ENCODE measurements at regions of chr13 and their contacts with region 1.

Region 1: GRCh38 chr13:25836574-25837336 is 215.1 kb downstream of the SHISA2 start:
- DNase-seq: no peak
- ATAC-seq: no peak
- H3K4me3 ChIP-seq: no peak overlapping the region
- H3K27ac ChIP-seq: no peak overlapping the region
- H3K4me1 ChIP-seq: no peaks in the 10 kb centered on the region
- H3K27me3 ChIP-seq: no peaks in the 10 kb centered on the region
- CTCF ChIP-seq: no peak
- EP300 ChIP-seq: no peak
- POLR2A ChIP-seq: no peak
- RAD21 ChIP-seq: no peak

Region 2: GRCh38 chr13:25890671-25891212 is 54.0 kb after region 1 on chr13:
- CTCF ChIA-PET with region 1: no interaction called
- POLR2A ChIA-PET with region 1: no interaction called
- RAD21 ChIA-PET with region 1: no interaction called
- SMC1A ChIA-PET with region 1: interaction called, 3 read pairs
- in situ Hi-C with region 1: loop called (anchors 10 kb)
- intact Hi-C with region 1: no loop called
- DNase-seq: no peak
- ATAC-seq: no peak
- H3K4me3 ChIP-seq: no peak overlapping the region
- H3K27ac ChIP-seq: no peak overlapping the region
- H3K4me1 ChIP-seq: no peaks in the 10 kb centered on the region
- H3K27me3 ChIP-seq: no peaks in the 10 kb centered on the region
- CTCF ChIP-seq: no peak
- EP300 ChIP-seq: no peak
- POLR2A ChIP-seq: no peak
- RAD21 ChIP-seq: no peak

Measured in GM12878 (cell line).